ENCODE measurements at regions of chr6 and their contacts with region 1.

Region 1: GRCh38 chr6:3194535-3195419 is 32.7 kb downstream of the TUBB2B start:
- DNase-seq: no peak
- ATAC-seq: peak; percentile 75
- H3K4me3 ChIP-seq: peak overlapping the region; percentile 46 to 67 (median 59)
- H3K27ac ChIP-seq: peak overlapping the region; percentile 66
- H3K4me1 ChIP-seq: peaks cover 39% of the 10 kb centered on the region
- H3K27me3 ChIP-seq: peaks cover 0 to 4% of the 10 kb centered on the region in 2 experiments; a peak in 1 of 5 replicates
- CTCF ChIP-seq: no peak
- EP300 ChIP-seq: no peak
- POLR2A ChIP-seq: 0 out of 4 replicates have a peak, but pooled peaks of 1 of the 2 experiments have one; percentile 13
- RAD21 ChIP-seq: no peak

Region 2: GRCh38 chr6:3151706-3152105 is 43.1 kb before region 1 on chr6:
- CTCF ChIA-PET with region 1: no interaction called
- POLR2A ChIA-PET with region 1: no interaction called
- in situ Hi-C with region 1: no loop called
- intact Hi-C with region 1: no loop called
- DNase-seq: no peak
- ATAC-seq: no peak; the same call in 2 of the 3 replicates
- H3K4me3 ChIP-seq: no peak overlapping the region
- H3K27ac ChIP-seq: no peak overlapping the region
- H3K4me1 ChIP-seq: peaks cover 9% of the 10 kb centered on the region; the same call in 1 of the 2 replicates
- H3K27me3 ChIP-seq: no peaks in the 10 kb centered on the region
- CTCF ChIP-seq: no peak
- EP300 ChIP-seq: no peak
- POLR2A ChIP-seq: peak in 1 of 2 experiments; percentile 30; a peak in 1 of 4 replicates
- RAD21 ChIP-seq: no peak

Region 3: GRCh38 chr6:3209114-3210023 is 14.6 kb after region 1 on chr6:
- CTCF ChIA-PET with region 1: no interaction called
- POLR2A ChIA-PET with region 1: interaction called, 15 read pairs
- in situ Hi-C with region 1: no loop called
- intact Hi-C with region 1: loop called (anchors 2 kb)
- DNase-seq: peak; percentile 88
- ATAC-seq: peak; percentile 90
- H3K4me3 ChIP-seq: peak overlapping the region in 2 of 3 experiments; percentile 3 to 35; a peak in 4 of 6 replicates
- H3K27ac ChIP-seq: no peak overlapping the region
- H3K4me1 ChIP-seq: peaks cover 23% of the 10 kb centered on the region
- H3K27me3 ChIP-seq: peaks cover 9 to 65% of the 10 kb centered on the region in 2 experiments; a peak in 4 of 5 replicates
- CTCF ChIP-seq: peak; percentile 71
- EP300 ChIP-seq: peak in 1 of 2 experiments; percentile 9; a peak in 1 of 4 replicates
- POLR2A ChIP-seq: no peak
- RAD21 ChIP-seq: 0 out of 2 replicates have a peak, but pooled peaks have one; percentile 20

Region 4: GRCh38 chr6:3258720-3259490 is 64.1 kb after region 1 on chr6 and contains the start of gene PSMG4:
- CTCF ChIA-PET with region 1: no interaction called
- POLR2A ChIA-PET with region 1: no interaction called
- in situ Hi-C with region 1: no loop called
- intact Hi-C with region 1: loop called (anchors 5 kb)
- DNase-seq: peak; percentile 84
- ATAC-seq: peak; percentile 89
- H3K4me3 ChIP-seq: peak within 1 kb of the TSS; percentile 92 to 96 (median 96)
- H3K27ac ChIP-seq: peak within 1 kb of the TSS; percentile 70
- H3K4me1 ChIP-seq: peaks cover 50% of the 10 kb centered on the region
- H3K27me3 ChIP-seq: peaks cover 0 to 32% of the 10 kb centered on the region in 2 experiments; a peak in 3 of 5 replicates
- CTCF ChIP-seq: peak; percentile 36
- EP300 ChIP-seq: no peak; a peak in 2 of 4 replicates
- POLR2A ChIP-seq: peak; percentile 79 to 89
- RAD21 ChIP-seq: peak; percentile 37; the same call in 1 of the 2 replicates
- total RNA-seq, gene PSMG4: 24.5 and 32.8 TPM in 2 replicates